Naive thymus-derived CD4-positive, alpha-beta T cell (primary cell): ENCODE measurements at regions of chr2 and their contacts with region 1.

Region 1: GRCh38 chr2:99337113-99338028 is at the start of gene EIF5B:
- DNase-seq: peak; percentile 78 to 92 (median 84)
- ATAC-seq: peak; percentile 78
- H3K4me3 ChIP-seq: peak within 1 kb of the TSS; percentile 85
- H3K4me3 Mint-ChIP-seq: no peak within 1 kb of the TSS
- H3K27ac ChIP-seq: peak within 1 kb of the TSS; percentile 78
- H3K27ac Mint-ChIP-seq: no peak within 1 kb of the TSS
- H3K4me1 ChIP-seq: peaks cover 20 to 25% of the 10 kb centered on the region in 2 donors
- H3K4me1 Mint-ChIP-seq: peaks cover 20 to 49% (median 45%) of the 10 kb centered on the region in 7 donors
- H3K27me3 ChIP-seq: no peaks in the 10 kb centered on the region
- H3K27me3 Mint-ChIP-seq: no peaks in the 10 kb centered on the region
- total RNA-seq, gene EIF5B: 28.0 to 49.0 (median 37.6) TPM

Region 2: GRCh38 chr2:97663965-97664635 is 1673.3 kb before region 1 on chr2 and contains the start of gene ACTR1B:
- CTCF ChIA-PET with region 1: interaction called, 3 read pairs
- POLR2A ChIA-PET with region 1: no interaction called
- intact Hi-C with region 1: loop called (anchors 2 to 5 kb)
- DNase-seq: peak; percentile 95 to 99 (median 98)
- ATAC-seq: peak; percentile 92
- H3K4me3 ChIP-seq: peak within 1 kb of the TSS; percentile 89
- H3K4me3 Mint-ChIP-seq: peak within 1 kb of the TSS; percentile 93 to 99 (median 96)
- H3K27ac ChIP-seq: peak within 1 kb of the TSS; percentile 98
- H3K27ac Mint-ChIP-seq: peak within 1 kb of the TSS; percentile 96 to 99 (median 98)
- H3K4me1 ChIP-seq: peaks cover 16 to 25% of the 10 kb centered on the region in 2 donors
- H3K4me1 Mint-ChIP-seq: peaks cover 15 to 48% (median 36%) of the 10 kb centered on the region in 7 donors
- H3K27me3 ChIP-seq: no peaks in the 10 kb centered on the region
- H3K27me3 Mint-ChIP-seq: no peaks in the 10 kb centered on the region
- total RNA-seq, gene ACTR1B: 75.9 to 95.5 (median 89.5) TPM

Region 3: GRCh38 chr2:98465456-98466226 is 871.7 kb before region 1 on chr2:
- CTCF ChIA-PET with region 1: no interaction called
- POLR2A ChIA-PET with region 1: no interaction called
- intact Hi-C with region 1: loop called in 1 of 2 experiments (anchors 5 kb)
- DNase-seq: peak; percentile 53 to 92 (median 85)
- ATAC-seq: peak; percentile 74
- H3K4me3 ChIP-seq: peak overlapping the region; percentile 61
- H3K4me3 Mint-ChIP-seq: peak overlapping the region; percentile 78 to 98 (median 87)
- H3K27ac ChIP-seq: peak overlapping the region; percentile 85
- H3K27ac Mint-ChIP-seq: peak overlapping the region; percentile 93 to 99 (median 96)
- H3K4me1 ChIP-seq: peaks cover 85 to 87% of the 10 kb centered on the region in 2 donors
- H3K4me1 Mint-ChIP-seq: peaks cover 70 to 95% (median 88%) of the 10 kb centered on the region in 7 donors
- H3K27me3 ChIP-seq: no peaks in the 10 kb centered on the region
- H3K27me3 Mint-ChIP-seq: no peaks in the 10 kb centered on the region

Region 4: GRCh38 chr2:99066075-99066958 is 271.1 kb before region 1 on chr2:
- CTCF ChIA-PET with region 1: no interaction called
- POLR2A ChIA-PET with region 1: no interaction called
- intact Hi-C with region 1: loop called in 1 of 2 experiments (anchors 2 kb)
- DNase-seq: peak in 7 of 9 donors; percentile 22 to 54 (median 40)
- ATAC-seq: peak; percentile 93
- H3K4me3 ChIP-seq: no peak overlapping the region
- H3K4me3 Mint-ChIP-seq: no peak overlapping the region
- H3K27ac ChIP-seq: peak overlapping the region; percentile 52
- H3K27ac Mint-ChIP-seq: no peak overlapping the region
- H3K4me1 ChIP-seq: peaks cover 8 to 23% of the 10 kb centered on the region in 2 donors
- H3K4me1 Mint-ChIP-seq: peaks cover 0 to 6% (median 0%) of the 10 kb centered on the region in 7 donors
- H3K27me3 ChIP-seq: no peaks in the 10 kb centered on the region
- H3K27me3 Mint-ChIP-seq: peaks cover 0 to 3% (median 0%) of the 10 kb centered on the region in 5 donors

Region 5: DNA sequence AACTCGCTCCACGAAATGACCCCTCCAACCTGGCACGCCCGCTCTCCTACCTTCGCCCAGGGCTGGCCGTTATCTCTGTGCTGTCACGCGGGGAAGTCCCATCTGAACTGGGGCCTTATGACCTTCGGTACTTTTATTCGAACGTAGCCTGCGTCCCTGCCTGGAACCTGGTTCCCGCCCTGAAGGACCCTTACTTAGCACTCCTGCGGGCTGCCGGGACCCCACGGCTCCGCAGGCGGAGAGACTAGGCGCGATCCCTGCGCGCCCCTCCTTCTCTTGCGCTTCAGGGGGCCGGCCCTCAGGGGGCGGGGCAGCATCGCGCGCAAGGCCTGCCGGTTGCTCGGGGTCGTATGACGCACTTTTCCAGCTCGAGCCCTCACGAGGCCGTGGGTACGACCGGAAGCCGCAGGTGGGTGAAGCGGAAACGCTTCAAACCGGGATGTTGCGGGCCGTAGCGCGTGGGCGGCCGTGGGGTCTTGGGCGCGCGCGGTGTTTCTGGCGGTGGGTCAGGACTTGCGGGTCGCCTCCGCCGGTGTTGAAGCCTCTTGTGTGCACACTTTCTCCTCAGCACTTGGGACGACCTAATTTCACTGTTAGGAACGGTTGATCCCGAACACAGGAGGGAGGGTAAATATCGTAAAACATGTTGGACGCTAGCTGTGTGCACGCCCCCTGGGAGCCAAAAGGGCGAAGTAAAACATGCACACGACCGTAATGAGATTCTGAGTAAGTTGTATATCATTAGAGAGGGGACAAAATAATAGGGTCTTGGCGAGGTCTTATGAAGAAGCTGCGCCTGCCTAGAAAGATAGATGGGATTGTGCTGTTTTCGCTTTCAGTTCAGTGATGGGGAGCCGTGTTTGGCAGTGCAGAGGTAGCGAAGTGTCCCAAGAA is 182.5 kb before region 1 on chr2 and contains the starts of genes LIPT1 and TSGA10:
- CTCF ChIA-PET with region 1: no interaction called
- POLR2A ChIA-PET with region 1: interaction called, 12 read pairs
- intact Hi-C with region 1: loop called (anchors 1 kb)
- DNase-seq: peak; percentile 80 to 95 (median 92)
- ATAC-seq: peak; percentile 98
- H3K4me3 ChIP-seq: peak within 1 kb of the TSS; percentile 83
- H3K4me3 Mint-ChIP-seq: peak within 1 kb of the TSS in 1 of 10 donors; percentile 93
- H3K27ac ChIP-seq: peak within 1 kb of the TSS; percentile 92
- H3K27ac Mint-ChIP-seq: peak within 1 kb of the TSS in 2 of 9 donors; percentile 96 to 97
- H3K4me1 ChIP-seq: peaks cover 15 to 18% of the 10 kb centered on the region in 2 donors
- H3K4me1 Mint-ChIP-seq: peaks cover 25 to 57% (median 42%) of the 10 kb centered on the region in 7 donors
- H3K27me3 ChIP-seq: no peaks in the 10 kb centered on the region
- H3K27me3 Mint-ChIP-seq: no peaks in the 10 kb centered on the region
- total RNA-seq, gene LIPT1: 7.7 to 24.1 (median 15.9) TPM
- total RNA-seq, gene TSGA10: 3.5 to 31.7 (median 12.6) TPM

Region 6: GRCh38 chr2:99489761-99490622 is 152.6 kb after region 1 on chr2 and contains the start of gene REV1:
- CTCF ChIA-PET with region 1: interaction called, 4 read pairs
- POLR2A ChIA-PET with region 1: interaction called, 12 read pairs
- intact Hi-C with region 1: loop called (anchors 1 kb)
- DNase-seq: peak; percentile 92 to 99 (median 96)
- ATAC-seq: peak; percentile 92
- H3K4me3 ChIP-seq: peak within 1 kb of the TSS; percentile 96
- H3K4me3 Mint-ChIP-seq: peak within 1 kb of the TSS; percentile 93 to 100 (median 97)
- H3K27ac ChIP-seq: peak within 1 kb of the TSS; percentile 83
- H3K27ac Mint-ChIP-seq: peak within 1 kb of the TSS; percentile 96 to 100 (median 99)
- H3K4me1 ChIP-seq: peaks cover 0 to 14% of the 10 kb centered on the region in 2 donors
- H3K4me1 Mint-ChIP-seq: peaks cover 27 to 45% (median 39%) of the 10 kb centered on the region in 7 donors
- H3K27me3 ChIP-seq: no peaks in the 10 kb centered on the region
- H3K27me3 Mint-ChIP-seq: no peaks in the 10 kb centered on the region
- total RNA-seq, gene REV1: 40.9 to 72.5 (median 54.7) TPM

Region 7: DNA sequence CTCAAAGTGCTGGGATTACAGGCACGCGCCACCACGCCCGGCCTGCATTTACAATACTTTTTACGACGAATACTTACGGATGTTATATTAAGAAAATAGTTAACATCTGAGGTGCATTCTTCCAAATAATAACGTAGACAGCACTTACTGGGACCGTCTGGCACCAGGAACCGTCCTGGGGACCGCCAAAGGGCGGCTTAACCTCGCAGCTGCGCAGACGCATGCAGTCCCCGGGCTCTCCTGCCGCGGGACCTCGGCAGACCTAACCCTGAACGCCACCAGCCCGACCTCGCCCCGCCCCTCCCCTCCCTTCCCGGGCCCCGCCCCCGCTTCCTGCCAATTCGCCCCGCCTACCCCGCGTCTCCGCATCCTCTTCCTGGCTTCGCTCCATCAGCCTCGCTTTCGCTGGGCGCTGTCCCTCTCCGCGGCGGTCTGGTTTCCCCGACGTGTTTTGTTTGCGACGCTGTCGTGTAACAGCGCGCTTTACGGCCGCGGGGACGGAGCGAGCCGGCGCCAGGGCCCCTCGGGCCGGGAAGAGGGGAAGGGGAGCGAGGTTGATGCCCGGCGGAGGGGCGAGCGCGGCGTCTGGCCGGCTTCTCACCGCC is 1915.1 kb after region 1 on chr2 and contains the start of gene CNOT11:
- CTCF ChIA-PET with region 1: no interaction called
- POLR2A ChIA-PET with region 1: no interaction called
- intact Hi-C with region 1: loop called in 1 of 2 experiments (anchors 1 kb)
- DNase-seq: peak; percentile 97 to 99 (median 98)
- ATAC-seq: peak; percentile 89
- H3K4me3 ChIP-seq: peak within 1 kb of the TSS; percentile 91
- H3K4me3 Mint-ChIP-seq: peak within 1 kb of the TSS; percentile 91 to 98 (median 96)
- H3K27ac ChIP-seq: peak within 1 kb of the TSS; percentile 99
- H3K27ac Mint-ChIP-seq: peak within 1 kb of the TSS; percentile 92 to 98 (median 96)
- H3K4me1 ChIP-seq: peaks cover 28 to 39% of the 10 kb centered on the region in 2 donors
- H3K4me1 Mint-ChIP-seq: peaks cover 27 to 58% (median 51%) of the 10 kb centered on the region in 7 donors
- H3K27me3 ChIP-seq: no peaks in the 10 kb centered on the region
- H3K27me3 Mint-ChIP-seq: no peaks in the 10 kb centered on the region
- total RNA-seq, gene CNOT11: 49.0 to 65.7 (median 54.3) TPM